Activated naive CD4-positive, alpha-beta T cell treated with anti-CD3 and anti-CD28 coated beads, Interleukin-2, amount 10 ng/mL, durations not matched to agents 7 days and 5 days (primary cell): ENCODE measurements at regions of chr6 and their contacts with region 1.

Region 1: DNA sequence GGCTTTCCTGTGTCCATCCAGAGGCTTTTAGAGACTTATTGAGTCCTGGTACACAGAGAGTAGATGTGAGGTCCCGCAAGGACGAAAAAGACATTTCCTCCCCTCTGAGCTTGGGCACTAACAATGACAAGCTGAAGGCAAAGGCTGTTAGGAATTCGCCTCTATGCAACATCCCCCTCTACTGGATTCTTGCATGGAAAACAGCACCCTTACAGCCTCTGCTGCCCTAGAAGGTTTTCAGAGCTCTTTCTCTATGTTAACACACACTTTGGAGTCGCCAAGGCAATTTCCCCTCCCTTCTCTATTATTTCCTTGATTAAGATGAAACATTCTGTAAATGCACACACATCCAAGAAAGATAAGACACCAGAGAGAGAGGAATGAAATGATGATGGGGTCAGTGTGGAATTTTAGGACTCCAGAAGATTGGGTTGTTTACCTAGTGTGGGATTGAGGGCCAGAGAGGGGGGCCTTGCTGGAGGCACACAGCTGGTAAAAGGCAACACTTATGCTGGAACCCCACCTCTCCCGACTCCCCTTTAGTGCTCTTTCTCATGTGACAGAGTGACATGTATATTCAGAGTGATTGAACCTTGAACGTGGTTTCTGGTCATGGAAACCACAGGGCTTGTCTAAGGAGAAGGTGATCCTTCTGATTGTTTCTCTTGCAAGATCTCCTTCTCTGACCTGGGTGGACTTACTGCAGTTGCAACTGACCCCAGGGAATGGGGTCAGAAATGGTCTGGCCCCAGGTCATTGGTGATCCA is 300.7 kb downstream of the CLIC5 start:
- DNase-seq: peak; percentile 69
- H3K4me3 Mint-ChIP-seq: no peak overlapping the region
- H3K27ac Mint-ChIP-seq: peak overlapping the region; percentile 58
- H3K4me1 Mint-ChIP-seq: peaks cover 37% of the 10 kb centered on the region
- H3K27me3 Mint-ChIP-seq: peaks cover 16% of the 10 kb centered on the region

Region 2: GRCh38 chr6:45377554-45378333 is 337.2 kb before region 1 on chr6 and contains the start of gene SUPT3H:
- CTCF ChIA-PET with region 1: interaction called, 11 read pairs
- DNase-seq: peak; percentile 90
- H3K4me3 Mint-ChIP-seq: peak within 1 kb of the TSS; percentile 99
- H3K27ac Mint-ChIP-seq: peak within 1 kb of the TSS; percentile 99
- H3K4me1 Mint-ChIP-seq: peaks cover 28% of the 10 kb centered on the region
- H3K27me3 Mint-ChIP-seq: no peaks in the 10 kb centered on the region

Region 3: GRCh38 chr6:45421709-45422502 is 293.0 kb before region 1 on chr6:
- CTCF ChIA-PET with region 1: interaction called, 20 read pairs
- DNase-seq: peak; percentile 57
- H3K4me3 Mint-ChIP-seq: peak overlapping the region; percentile 91
- H3K27ac Mint-ChIP-seq: peak overlapping the region; percentile 87
- H3K4me1 Mint-ChIP-seq: peaks cover 35% of the 10 kb centered on the region
- H3K27me3 Mint-ChIP-seq: peaks cover 61% of the 10 kb centered on the region

Region 4: DNA sequence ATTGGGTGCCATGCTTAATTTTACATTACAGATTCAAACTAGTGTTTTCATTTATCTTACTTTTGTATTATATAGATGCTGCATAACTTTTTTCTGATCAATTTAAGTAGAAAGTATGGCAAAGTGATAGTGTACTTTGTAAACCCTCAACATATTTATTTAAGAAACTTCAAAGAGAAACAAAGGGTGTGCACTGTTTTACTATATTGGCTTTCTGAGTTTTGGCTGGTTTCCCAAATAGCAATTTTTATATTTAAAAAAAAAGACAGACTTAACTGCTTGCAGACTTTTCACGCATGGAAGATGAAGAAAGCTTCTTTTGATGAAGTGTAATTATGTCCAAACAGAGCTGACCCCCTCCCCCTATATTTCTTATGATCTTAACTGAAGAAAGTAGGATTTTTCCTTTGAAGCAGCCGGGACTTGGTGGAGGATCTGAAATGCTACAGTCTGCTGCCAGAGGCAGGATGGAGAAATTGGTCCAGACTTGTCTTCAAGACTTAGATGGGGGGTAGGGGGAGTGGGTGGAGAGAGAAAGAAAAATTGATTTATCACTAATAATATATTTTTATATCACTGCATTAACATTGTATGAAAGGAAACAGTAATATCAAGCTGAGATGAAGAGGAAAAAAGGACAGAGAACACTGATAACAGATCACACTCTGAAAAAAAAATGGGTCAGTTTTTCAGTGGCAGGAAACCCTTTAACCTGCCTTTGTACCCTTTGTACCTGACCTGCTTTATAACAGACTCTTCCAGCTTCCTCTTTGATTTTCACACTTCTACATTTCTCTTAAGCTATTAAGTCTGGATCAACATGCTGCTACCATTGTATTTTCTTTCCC is 281.2 kb before region 1 on chr6:
- CTCF ChIA-PET with region 1: no interaction called
- DNase-seq: no peak
- H3K4me3 Mint-ChIP-seq: no peak overlapping the region
- H3K27ac Mint-ChIP-seq: peak overlapping the region; percentile 30
- H3K4me1 Mint-ChIP-seq: peaks cover 51% of the 10 kb centered on the region
- H3K27me3 Mint-ChIP-seq: peaks cover 1% of the 10 kb centered on the region

Region 5: GRCh38 chr6:45691426-45691825 is 23.5 kb before region 1 on chr6:
- CTCF ChIA-PET with region 1: no interaction called
- DNase-seq: no peak
- H3K4me3 Mint-ChIP-seq: no peak overlapping the region
- H3K27ac Mint-ChIP-seq: no peak overlapping the region
- H3K4me1 Mint-ChIP-seq: peaks cover 2% of the 10 kb centered on the region
- H3K27me3 Mint-ChIP-seq: peaks cover 12% of the 10 kb centered on the region